Ascending aorta (tissue), 2 donors: ENCODE measurements at regions of chr14 and their contacts with region 1.

Region 1: GRCh38 chr14:50964595-50965390 is 20.5 kb upstream of the PYGL start:
- DNase-seq: peak in 1 of 2 donors; percentile 87
- H3K4me3 ChIP-seq: no peak overlapping the region
- H3K27ac ChIP-seq: peak overlapping the region in 1 of 2 donors; percentile 47
- H3K4me1 ChIP-seq: peaks cover 8 to 17% of the 10 kb centered on the region in 2 donors
- H3K27me3 ChIP-seq: no peaks in the 10 kb centered on the region
- CTCF ChIP-seq: no peak

Region 2: GRCh38 chr14:49677643-49678042 is 1287.2 kb before region 1 on chr14:
- intact Hi-C with region 1: no loop called
- DNase-seq: no peak
- H3K4me3 ChIP-seq: no peak overlapping the region
- H3K27ac ChIP-seq: no peak overlapping the region
- H3K4me1 ChIP-seq: no peaks in the 10 kb centered on the region
- H3K27me3 ChIP-seq: no peaks in the 10 kb centered on the region
- CTCF ChIP-seq: no peak

Region 3: GRCh38 chr14:50943943-50944646 is 20.7 kb before region 1 on chr14 and contains the start of gene PYGL:
- intact Hi-C with region 1: loop called (anchors 1 kb)
- DNase-seq: peak in 1 of 2 donors; percentile 84
- H3K4me3 ChIP-seq: peak within 1 kb of the TSS; percentile 76 to 84
- H3K27ac ChIP-seq: peak within 1 kb of the TSS; percentile 64 to 84
- H3K4me1 ChIP-seq: no peaks in the 10 kb centered on the region
- H3K27me3 ChIP-seq: no peaks in the 10 kb centered on the region
- CTCF ChIP-seq: no peak
- total RNA-seq, gene PYGL: 13.8 TPM

Region 4: GRCh38 chr14:51006781-51007211 is 42.0 kb after region 1 on chr14:
- intact Hi-C with region 1: loop called (anchors 5 kb)
- DNase-seq: peak in 1 of 2 donors; percentile 71
- H3K4me3 ChIP-seq: no peak overlapping the region
- H3K27ac ChIP-seq: no peak overlapping the region
- H3K4me1 ChIP-seq: no peaks in the 10 kb centered on the region
- H3K27me3 ChIP-seq: no peaks in the 10 kb centered on the region
- CTCF ChIP-seq: no peak

Region 5: GRCh38 chr14:51020024-51020710 is 55.4 kb after region 1 on chr14:
- intact Hi-C with region 1: no loop called
- DNase-seq: no peak
- H3K4me3 ChIP-seq: no peak overlapping the region
- H3K27ac ChIP-seq: no peak overlapping the region
- H3K4me1 ChIP-seq: no peaks in the 10 kb centered on the region
- H3K27me3 ChIP-seq: no peaks in the 10 kb centered on the region
- CTCF ChIP-seq: no peak

Region 6: GRCh38 chr14:51094901-51095853 is 130.4 kb after region 1 on chr14 and contains the start of gene TRIM9:
- intact Hi-C with region 1: loop called (anchors 5 kb)
- DNase-seq: peak; percentile 44 to 91
- H3K4me3 ChIP-seq: peak within 1 kb of the TSS; percentile 61 to 73
- H3K27ac ChIP-seq: peak within 1 kb of the TSS; percentile 35 to 53
- H3K4me1 ChIP-seq: peaks cover 6 to 14% of the 10 kb centered on the region in 2 donors
- H3K27me3 ChIP-seq: no peaks in the 10 kb centered on the region
- CTCF ChIP-seq: no peak
- total RNA-seq, gene TRIM9: 4.2 TPM

Region 7: DNA sequence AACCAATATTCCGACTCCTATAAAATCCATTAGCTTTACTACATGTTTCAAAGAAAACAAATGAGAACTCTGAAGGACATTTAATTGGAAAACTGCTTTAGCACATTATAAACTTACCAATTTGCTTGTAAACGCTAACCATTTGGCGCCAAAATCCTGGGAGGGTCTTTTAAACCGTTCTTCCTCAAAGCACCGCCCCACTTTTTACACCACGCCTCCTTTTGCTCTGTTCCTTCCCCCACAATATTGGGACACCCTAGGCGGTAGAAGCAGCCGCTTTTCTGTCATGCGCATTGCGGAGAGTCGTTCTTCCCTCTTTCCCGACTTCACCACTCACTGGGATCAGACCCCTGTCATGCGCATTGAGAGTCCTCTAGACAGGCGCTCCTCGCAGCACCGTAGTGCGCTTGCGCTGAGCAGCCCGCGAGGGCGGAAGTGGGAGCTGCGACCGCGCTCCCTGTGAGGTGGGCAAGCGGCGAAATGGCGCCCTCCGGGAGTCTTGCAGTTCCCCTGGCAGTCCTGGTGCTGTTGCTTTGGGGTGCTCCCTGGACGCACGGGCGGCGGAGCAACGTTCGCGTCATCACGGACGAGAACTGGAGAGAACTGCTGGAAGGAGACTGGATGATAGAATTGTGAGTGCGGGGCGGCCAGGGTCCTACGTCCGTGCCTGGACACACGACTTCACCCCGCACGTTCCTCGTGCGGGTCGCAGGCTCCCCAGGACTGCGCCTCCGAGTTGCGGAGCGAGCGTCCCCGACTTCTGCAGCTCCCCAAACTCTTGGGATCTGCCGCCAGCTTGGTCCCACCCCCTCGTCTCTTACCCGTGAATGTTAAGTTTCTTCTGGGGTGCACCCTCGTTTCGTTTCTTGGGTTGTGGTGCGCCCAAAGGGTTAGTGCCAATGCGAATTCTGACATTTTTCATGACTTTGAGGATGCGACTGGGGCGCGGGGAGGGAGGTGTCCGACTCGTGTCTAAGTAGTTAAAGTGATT is 275.3 kb after region 1 on chr14 and contains the start of gene TMX1:
- intact Hi-C with region 1: loop called (anchors 5 kb)
- DNase-seq: peak; percentile 92 to 98
- H3K4me3 ChIP-seq: peak within 1 kb of the TSS; percentile 93 to 96
- H3K27ac ChIP-seq: peak within 1 kb of the TSS; percentile 84 to 88
- H3K4me1 ChIP-seq: peaks cover 0 to 5% of the 10 kb centered on the region in 2 donors
- H3K27me3 ChIP-seq: no peaks in the 10 kb centered on the region
- CTCF ChIP-seq: no peak
- total RNA-seq, gene TMX1: 5.1 TPM